ENCODE measurements at regions of chr19 and their contacts with region 1.

Region 1: GRCh38 chr19:2750808-2751443 is 11.1 kb upstream of the SLC39A3 start:
- DNase-seq: no peak
- H3K4me3 ChIP-seq: no peak overlapping the region
- H3K27ac ChIP-seq: no peak overlapping the region
- H3K4me1 ChIP-seq: peaks cover 0 to 4% (median 2%) of the 10 kb centered on the region in 4 experiments
- H3K27me3 ChIP-seq: no peaks in the 10 kb centered on the region

Region 2: DNA sequence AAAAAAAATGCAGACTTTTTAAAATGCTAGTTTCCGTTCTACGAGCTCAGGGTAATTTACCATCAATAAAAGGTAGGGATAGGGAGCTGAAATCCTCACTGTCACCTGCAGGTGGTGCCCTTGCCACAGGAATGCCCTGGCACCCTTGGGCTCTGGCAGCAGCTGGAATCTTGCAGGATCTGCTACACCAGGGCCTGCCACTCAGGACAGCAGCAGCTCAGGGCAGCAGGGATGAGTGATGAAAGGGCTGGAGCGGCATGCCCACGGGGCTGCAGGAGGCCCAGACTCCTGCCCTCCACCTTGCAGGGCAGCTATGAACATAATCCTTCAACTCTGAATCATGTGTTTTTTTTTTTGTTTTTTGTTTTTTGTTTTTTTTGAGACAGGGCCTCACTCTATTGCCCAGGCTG is 102.4 kb before region 1 on chr19:
- CTCF ChIA-PET with region 1: interaction called, 68 read pairs
- POLR2A ChIA-PET with region 1: interaction called, 6 read pairs
- DNase-seq: peak; percentile 87 to 95 (median 92)
- H3K4me3 ChIP-seq: no peak overlapping the region
- H3K27ac ChIP-seq: no peak overlapping the region
- H3K4me1 ChIP-seq: no peaks in the 10 kb centered on the region
- H3K27me3 ChIP-seq: no peaks in the 10 kb centered on the region

Region 3: DNA sequence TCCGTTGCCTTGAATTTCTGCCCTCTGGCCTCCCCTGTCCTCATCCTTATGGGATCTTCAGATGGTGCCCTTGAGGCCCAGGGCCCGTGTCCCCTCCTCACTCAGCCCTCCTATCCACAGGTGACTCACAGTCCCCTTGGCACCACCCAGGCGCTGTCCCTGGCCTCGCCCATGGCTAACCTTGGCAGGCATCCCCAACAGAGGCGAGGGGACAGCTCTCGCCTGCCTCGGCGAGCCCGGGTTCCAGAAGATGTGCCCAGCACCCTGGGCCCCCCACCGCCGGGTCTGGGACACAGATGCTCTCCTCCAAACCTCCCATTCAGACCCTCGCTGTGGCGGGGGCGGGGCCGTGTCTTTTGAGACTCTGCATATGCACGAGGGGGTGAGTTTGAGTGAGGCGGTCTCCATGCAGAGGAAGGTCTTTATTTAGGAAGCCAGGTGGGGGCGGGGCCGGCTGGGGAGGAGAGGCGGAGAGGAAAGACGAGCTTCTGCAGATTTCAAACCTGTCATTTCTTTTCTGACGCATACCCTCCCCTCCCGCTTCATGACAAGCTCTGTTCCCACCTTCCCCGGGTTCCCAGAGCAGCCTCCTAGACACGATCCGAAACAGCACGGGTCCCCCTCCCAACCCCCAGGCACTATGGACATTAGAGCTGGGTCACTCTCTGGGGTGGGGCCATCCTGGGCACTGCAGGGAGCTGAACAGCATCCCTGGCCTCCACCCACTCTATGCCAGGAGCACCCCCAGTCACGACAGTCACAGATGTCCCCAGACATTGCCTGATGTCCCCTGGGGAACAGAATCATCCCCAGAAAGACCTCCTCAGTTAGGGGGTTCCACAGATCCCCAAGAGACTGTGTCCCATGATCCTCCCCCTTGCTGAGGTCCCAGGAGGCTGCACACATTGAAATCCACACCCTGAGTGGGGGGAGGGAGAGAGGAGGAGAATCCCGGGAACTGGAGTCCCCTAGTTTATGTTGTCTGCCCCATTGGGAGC is 96.9 kb before region 1 on chr19:
- CTCF ChIA-PET with region 1: interaction called, 68 read pairs
- POLR2A ChIA-PET with region 1: interaction called, 6 read pairs
- DNase-seq: no peak
- H3K4me3 ChIP-seq: no peak overlapping the region
- H3K27ac ChIP-seq: no peak overlapping the region
- H3K4me1 ChIP-seq: no peaks in the 10 kb centered on the region
- H3K27me3 ChIP-seq: no peaks in the 10 kb centered on the region

Region 4: DNA sequence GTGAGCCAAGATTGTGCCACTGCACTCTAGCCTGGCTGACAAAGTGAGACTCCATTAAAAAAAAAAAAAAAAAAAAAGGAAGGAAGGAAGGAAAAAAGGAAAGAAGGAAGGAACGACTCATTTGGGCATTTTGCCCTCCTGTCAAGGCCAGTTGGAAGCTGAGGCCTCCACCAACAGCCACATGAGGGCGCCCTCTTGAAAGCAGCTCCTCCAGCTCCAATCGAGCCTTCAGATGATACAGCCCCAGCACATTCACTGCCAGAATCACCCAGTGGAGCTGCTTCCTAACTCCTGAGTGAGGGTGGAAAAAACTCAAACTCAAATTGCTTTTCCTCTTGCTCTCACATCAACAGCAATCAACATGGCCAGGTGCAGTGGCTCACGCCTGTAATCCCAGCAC is 89.3 kb before region 1 on chr19:
- CTCF ChIA-PET with region 1: interaction called, 10 read pairs
- POLR2A ChIA-PET with region 1: no interaction called
- DNase-seq: peak in 2 of 3 donors; percentile 36 to 41
- H3K4me3 ChIP-seq: no peak overlapping the region
- H3K27ac ChIP-seq: no peak overlapping the region
- H3K4me1 ChIP-seq: peaks cover 0 to 6% (median 0%) of the 10 kb centered on the region in 4 experiments
- H3K27me3 ChIP-seq: no peaks in the 10 kb centered on the region

Region 5: GRCh38 chr19:2719910-2720776 is 30.8 kb before region 1 on chr19:
- CTCF ChIA-PET with region 1: no interaction called
- POLR2A ChIA-PET with region 1: no interaction called
- DNase-seq: peak in 2 of 3 donors; percentile 28 to 41
- H3K4me3 ChIP-seq: peak overlapping the region; percentile 15 to 57 (median 47)
- H3K27ac ChIP-seq: no peak overlapping the region
- H3K4me1 ChIP-seq: peaks cover 0 to 25% (median 21%) of the 10 kb centered on the region in 4 experiments
- H3K27me3 ChIP-seq: peaks cover 0 to 21% (median 0%) of the 10 kb centered on the region in 5 experiments

Region 6: DNA sequence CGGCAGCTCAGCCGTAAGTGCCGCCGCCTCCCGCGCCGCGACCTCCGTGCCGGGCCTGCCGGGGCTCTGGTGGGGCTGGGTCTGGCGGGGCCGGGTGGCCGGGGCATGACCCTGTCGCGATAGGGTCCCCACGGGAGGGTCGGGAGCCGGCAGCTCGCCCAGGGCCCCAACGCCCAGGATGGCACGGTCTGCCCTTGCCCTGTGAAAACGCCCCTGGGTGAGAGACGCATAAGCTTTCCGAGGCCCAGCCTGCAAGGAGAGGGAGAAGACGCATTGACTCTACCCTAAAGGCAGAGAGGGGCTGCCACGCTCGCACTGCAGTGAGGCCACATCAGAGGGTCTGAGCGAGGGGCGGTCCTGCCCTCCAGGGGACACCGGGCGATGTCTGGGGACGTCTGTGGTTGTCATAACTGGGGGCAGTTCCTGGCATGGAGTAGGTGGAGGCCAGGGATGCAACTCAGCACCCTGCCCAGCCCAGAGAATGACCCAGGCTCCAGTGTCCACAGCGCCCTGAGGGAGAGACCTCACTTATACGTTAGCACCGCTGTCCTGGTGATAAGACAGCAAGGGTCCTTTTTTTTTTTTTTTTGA is 69.3 kb after region 1 on chr19:
- CTCF ChIA-PET with region 1: no interaction called
- POLR2A ChIA-PET with region 1: no interaction called
- DNase-seq: peak; percentile 24 to 56 (median 51)
- H3K4me3 ChIP-seq: peak overlapping the region; percentile 77 to 90 (median 80)
- H3K27ac ChIP-seq: peak overlapping the region; percentile 50 to 74
- H3K4me1 ChIP-seq: peaks cover 0 to 8% (median 4%) of the 10 kb centered on the region in 4 experiments
- H3K27me3 ChIP-seq: no peaks in the 10 kb centered on the region

Region 7: GRCh38 chr19:2834215-2834871 is 83.4 kb after region 1 on chr19:
- CTCF ChIA-PET with region 1: no interaction called
- POLR2A ChIA-PET with region 1: no interaction called
- DNase-seq: no peak
- H3K4me3 ChIP-seq: no peak overlapping the region
- H3K27ac ChIP-seq: no peak overlapping the region
- H3K4me1 ChIP-seq: no peaks in the 10 kb centered on the region
- H3K27me3 ChIP-seq: no peaks in the 10 kb centered on the region